ENCODE measurements at regions of chr18 and their contacts with region 1.

Region 1: GRCh38 chr18:3074087-3074486 is 61.1 kb upstream of the LPIN2 start:
- DNase-seq: no peak
- ATAC-seq: peak; percentile 25 to 42
- H3K4me3 ChIP-seq: no peak overlapping the region
- H3K27ac ChIP-seq: no peak overlapping the region
- H3K4me1 ChIP-seq: no peaks in the 10 kb centered on the region
- H3K27me3 ChIP-seq: no peaks in the 10 kb centered on the region

Region 2: DNA sequence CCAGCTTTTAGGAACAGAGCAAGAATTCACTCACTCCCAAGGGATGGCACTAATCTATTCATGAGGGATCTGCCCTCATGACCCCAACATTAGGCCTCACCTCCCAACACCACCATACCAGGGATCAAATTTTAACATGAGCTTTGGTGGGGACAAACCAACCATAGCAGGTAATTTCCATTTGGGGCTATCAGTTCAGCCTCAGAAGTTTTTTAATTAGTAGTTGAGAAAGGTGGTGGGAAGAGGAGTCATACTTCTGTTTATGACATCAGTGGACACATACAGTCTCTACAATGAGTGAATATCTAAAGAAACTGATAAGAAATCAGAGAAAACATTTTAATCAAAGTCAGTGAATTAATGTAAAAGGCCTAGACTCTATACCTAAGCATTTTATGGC is 286.9 kb before region 1 on chr18:
- intact Hi-C with region 1: no loop called
- DNase-seq: no peak
- ATAC-seq: no peak
- H3K4me3 ChIP-seq: no peak overlapping the region
- H3K27ac ChIP-seq: no peak overlapping the region
- H3K4me1 ChIP-seq: no peaks in the 10 kb centered on the region
- H3K27me3 ChIP-seq: no peaks in the 10 kb centered on the region

Region 3: GRCh38 chr18:3129053-3129864 is 55.2 kb after region 1 on chr18:
- intact Hi-C with region 1: loop called in 2 of 4 experiments (anchors 10 kb)
- DNase-seq: peak; percentile 83 to 93 (median 90)
- ATAC-seq: peak; percentile 92 to 95
- H3K4me3 ChIP-seq: no peak overlapping the region
- H3K27ac ChIP-seq: no peak overlapping the region
- H3K4me1 ChIP-seq: no peaks in the 10 kb centered on the region
- H3K27me3 ChIP-seq: no peaks in the 10 kb centered on the region

Region 4: GRCh38 chr18:3384664-3385189 is 310.6 kb after region 1 on chr18:
- intact Hi-C with region 1: no loop called
- DNase-seq: no peak
- ATAC-seq: no peak
- H3K4me3 ChIP-seq: no peak overlapping the region
- H3K27ac ChIP-seq: no peak overlapping the region
- H3K4me1 ChIP-seq: no peaks in the 10 kb centered on the region
- H3K27me3 ChIP-seq: no peaks in the 10 kb centered on the region

Measured in right cardiac atrium (tissue), 5 donors.